ENCODE measurements at regions of chr11 and their contacts with region 1.

Region 1: GRCh38 chr11:86418917-86419316 is 44.2 kb downstream of the CCDC81 start:
- DNase-seq: no peak
- ATAC-seq: peak; percentile 83
- H3K4me3 ChIP-seq: no peak overlapping the region
- H3K27ac ChIP-seq: no peak overlapping the region
- H3K4me1 ChIP-seq: no peaks in the 10 kb centered on the region; the same call in 1 of the 2 replicates
- H3K27me3 ChIP-seq: no peaks in the 10 kb centered on the region
- CTCF ChIP-seq: peak; percentile 18 to 48 (median 24); a peak in 4 of 6 replicates
- EP300 ChIP-seq: no peak
- POLR2A ChIP-seq: no peak
- RAD21 ChIP-seq: peak; percentile 50; the same call in 1 of the 2 replicates

Region 2: GRCh38 chr11:85854557-85855340 is 564.2 kb before region 1 on chr11:
- CTCF ChIA-PET with region 1: interaction called, 3 read pairs
- POLR2A ChIA-PET with region 1: no interaction called
- RAD21 ChIA-PET with region 1: interaction called, 4 read pairs
- SMC1A ChIA-PET with region 1: interaction called, 3 read pairs
- in situ Hi-C with region 1: no loop called
- intact Hi-C with region 1: loop called (anchors 2 kb)
- DNase-seq: peak; percentile 57
- ATAC-seq: peak; percentile 100
- H3K4me3 ChIP-seq: peak overlapping the region; percentile 75
- H3K27ac ChIP-seq: peak overlapping the region; percentile 27; the same call in 1 of the 2 replicates
- H3K4me1 ChIP-seq: peaks cover 8% of the 10 kb centered on the region
- H3K27me3 ChIP-seq: no peaks in the 10 kb centered on the region
- CTCF ChIP-seq: peak; percentile 77 to 95 (median 82)
- EP300 ChIP-seq: no peak
- POLR2A ChIP-seq: peak; percentile 71
- RAD21 ChIP-seq: peak; percentile 83

Region 3: GRCh38 chr11:85941380-85941973 is 477.4 kb before region 1 on chr11:
- CTCF ChIA-PET with region 1: no interaction called
- POLR2A ChIA-PET with region 1: no interaction called
- RAD21 ChIA-PET with region 1: no interaction called
- SMC1A ChIA-PET with region 1: no interaction called
- in situ Hi-C with region 1: no loop called
- intact Hi-C with region 1: loop called (anchors 5 kb)
- DNase-seq: no peak
- ATAC-seq: peak; percentile 77
- H3K4me3 ChIP-seq: no peak overlapping the region
- H3K27ac ChIP-seq: no peak overlapping the region
- H3K4me1 ChIP-seq: no peaks in the 10 kb centered on the region
- H3K27me3 ChIP-seq: no peaks in the 10 kb centered on the region
- CTCF ChIP-seq: peak; percentile 51 to 54 (median 52)
- EP300 ChIP-seq: no peak
- POLR2A ChIP-seq: no peak
- RAD21 ChIP-seq: peak; percentile 72

Region 4: DNA sequence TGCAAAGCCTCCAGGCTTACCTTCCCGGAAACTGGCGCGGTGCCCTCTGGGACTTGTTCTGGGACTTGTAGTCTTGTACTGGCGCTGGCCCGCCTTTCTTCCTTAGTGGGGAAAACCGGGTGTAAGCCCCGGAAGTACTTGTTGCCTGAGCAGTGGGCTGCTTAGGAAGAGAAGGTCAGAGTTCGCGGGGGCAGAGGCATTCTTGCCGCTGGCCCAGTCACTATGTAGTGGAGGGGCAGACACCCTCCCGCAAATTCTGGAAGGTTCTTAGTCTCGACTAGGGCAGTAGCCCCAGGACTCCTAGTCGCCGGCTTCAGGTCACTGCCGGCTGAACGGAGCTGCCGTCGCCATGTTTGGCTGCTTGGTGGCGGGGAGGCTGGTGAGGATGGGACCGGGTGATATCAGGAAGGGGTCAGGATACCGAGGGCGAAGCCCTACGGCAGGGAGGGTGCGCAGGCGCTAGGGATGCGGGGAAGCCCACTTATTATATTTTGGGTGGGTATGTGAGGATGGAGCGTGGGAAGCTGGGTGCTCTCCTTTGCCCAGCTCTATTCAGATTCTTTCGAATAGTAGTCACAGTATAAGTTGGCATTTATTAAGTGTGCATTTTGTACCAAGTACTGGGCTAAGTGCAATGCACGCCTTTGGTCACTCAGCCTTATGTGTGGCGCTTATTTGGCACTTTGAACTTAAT is 116.7 kb before region 1 on chr11 and contains the start of gene HIKESHI:
- CTCF ChIA-PET with region 1: no interaction called
- POLR2A ChIA-PET with region 1: no interaction called
- RAD21 ChIA-PET with region 1: no interaction called
- SMC1A ChIA-PET with region 1: no interaction called
- in situ Hi-C with region 1: no loop called
- intact Hi-C with region 1: no loop called
- DNase-seq: peak; percentile 76
- ATAC-seq: peak; percentile 99
- H3K4me3 ChIP-seq: peak within 1 kb of the TSS; percentile 87
- H3K27ac ChIP-seq: peak within 1 kb of the TSS; percentile 87
- H3K4me1 ChIP-seq: 0 out of 2 replicates have a peak, but pooled peaks cover 3% of the 10 kb centered on the region
- H3K27me3 ChIP-seq: no peaks in the 10 kb centered on the region
- CTCF ChIP-seq: no peak
- EP300 ChIP-seq: no peak
- POLR2A ChIP-seq: peak; percentile 91
- RAD21 ChIP-seq: no peak
- polyA plus RNA-seq, gene HIKESHI: 156 to 228 TPM

Region 5: DNA sequence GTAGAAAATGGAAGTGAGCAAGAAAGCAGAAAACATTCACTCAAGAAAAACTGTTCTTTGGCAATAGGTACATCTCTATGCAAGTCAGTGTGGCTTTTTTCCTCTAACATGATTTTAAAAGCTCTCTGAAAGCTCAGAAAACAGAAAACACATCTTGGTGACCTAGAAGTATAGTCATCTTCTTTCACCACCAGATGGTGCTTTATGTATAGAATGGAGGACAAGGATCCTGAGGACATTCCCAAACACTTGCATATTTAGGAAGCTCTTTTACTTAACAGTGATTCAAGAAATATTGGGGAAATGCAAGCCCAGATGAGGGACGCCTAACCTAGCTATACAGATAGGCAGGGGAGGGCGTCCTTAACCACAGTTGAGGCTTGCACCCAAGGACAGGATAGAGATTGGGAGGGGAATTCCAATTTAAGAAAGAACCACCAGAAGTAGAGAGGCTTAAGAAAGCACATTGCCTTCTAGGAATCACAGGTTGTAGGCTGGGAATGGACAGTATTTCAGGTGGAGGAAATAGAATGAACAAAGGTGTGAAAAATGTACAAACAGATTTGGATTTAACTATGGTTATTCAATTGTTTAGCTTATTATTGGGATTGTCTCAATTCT is 58.0 kb before region 1 on chr11:
- CTCF ChIA-PET with region 1: interaction called, 11 read pairs
- POLR2A ChIA-PET with region 1: no interaction called
- RAD21 ChIA-PET with region 1: no interaction called
- SMC1A ChIA-PET with region 1: no interaction called
- in situ Hi-C with region 1: no loop called
- intact Hi-C with region 1: no loop called
- DNase-seq: no peak
- ATAC-seq: peak; percentile 45; the same call in 1 of the 3 replicates
- H3K4me3 ChIP-seq: no peak overlapping the region
- H3K27ac ChIP-seq: no peak overlapping the region
- H3K4me1 ChIP-seq: no peaks in the 10 kb centered on the region
- H3K27me3 ChIP-seq: no peaks in the 10 kb centered on the region
- CTCF ChIP-seq: no peak; a peak in 1 of 6 replicates
- EP300 ChIP-seq: no peak
- POLR2A ChIP-seq: no peak
- RAD21 ChIP-seq: 0 out of 2 replicates have a peak, but pooled peaks have one; percentile 1

Region 6: GRCh38 chr11:86497181-86497701 is 78.3 kb after region 1 on chr11:
- CTCF ChIA-PET with region 1: no interaction called
- POLR2A ChIA-PET with region 1: no interaction called
- RAD21 ChIA-PET with region 1: no interaction called
- SMC1A ChIA-PET with region 1: no interaction called
- in situ Hi-C with region 1: no loop called
- intact Hi-C with region 1: no loop called
- DNase-seq: no peak
- ATAC-seq: no peak
- H3K4me3 ChIP-seq: no peak overlapping the region
- H3K27ac ChIP-seq: no peak overlapping the region
- H3K4me1 ChIP-seq: no peaks in the 10 kb centered on the region
- H3K27me3 ChIP-seq: peaks cover 0 to 2% of the 10 kb centered on the region in 2 experiments
- CTCF ChIP-seq: no peak
- EP300 ChIP-seq: no peak
- POLR2A ChIP-seq: no peak
- RAD21 ChIP-seq: no peak